ENCODE measurements at regions of chr4 and their contacts with region 1.

Region 1: DNA sequence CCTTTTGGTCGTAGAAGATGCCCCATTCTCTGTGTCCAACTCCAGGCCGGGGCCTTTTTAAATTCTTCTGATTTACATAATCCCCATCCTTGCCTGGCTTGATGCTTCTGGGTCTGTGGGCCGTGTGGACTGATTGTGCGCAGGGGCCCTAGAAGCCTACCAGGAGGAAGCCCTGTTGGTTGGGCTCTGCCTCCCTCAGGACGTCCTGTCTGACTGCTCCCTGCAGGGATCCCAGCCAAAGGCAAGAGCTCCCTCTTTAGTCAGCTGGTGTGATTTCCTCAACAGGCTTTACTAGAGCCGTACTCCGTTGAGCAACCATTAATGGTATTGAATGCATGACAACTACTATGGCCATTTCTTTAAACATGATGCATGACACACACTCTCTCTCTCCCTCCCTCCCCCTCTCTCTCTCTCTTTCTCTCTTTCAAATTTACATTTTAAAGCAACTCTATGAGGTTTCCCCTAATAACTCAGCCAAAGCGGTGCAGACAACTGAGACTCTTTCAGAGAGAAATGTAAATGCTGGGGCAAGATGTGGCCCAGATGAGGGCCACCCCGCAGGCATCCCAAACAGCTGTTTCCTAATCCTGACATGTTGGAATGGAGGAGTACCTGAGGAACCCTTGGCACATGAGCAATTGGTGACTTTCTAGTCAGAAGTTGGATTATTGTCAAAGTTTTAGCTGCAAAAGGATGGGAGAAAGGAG is 117.3 kb downstream of the DRD5 start:
- DNase-seq: peak; percentile 76
- ATAC-seq: peak; percentile 98
- H3K4me3 Mint-ChIP-seq: no peak overlapping the region
- H3K27ac Mint-ChIP-seq: no peak overlapping the region
- H3K4me1 Mint-ChIP-seq: peaks cover 12% of the 10 kb centered on the region
- H3K27me3 Mint-ChIP-seq: no peaks in the 10 kb centered on the region
- CTCF ChIP-seq: no peak

Region 2: GRCh38 chr4:9762823-9763475 is 135.8 kb before region 1 on chr4:
- CTCF ChIA-PET with region 1: interaction called, 39 read pairs
- POLR2A ChIA-PET with region 1: no interaction called
- DNase-seq: peak; percentile 58
- ATAC-seq: no peak; the same call in 1 of the 2 replicates
- H3K4me3 Mint-ChIP-seq: no peak overlapping the region
- H3K27ac Mint-ChIP-seq: no peak overlapping the region
- H3K4me1 Mint-ChIP-seq: peaks cover 2% of the 10 kb centered on the region
- H3K27me3 Mint-ChIP-seq: peaks cover 3% of the 10 kb centered on the region; the same call in 1 of the 2 replicates
- CTCF ChIP-seq: peak; percentile 44; the same call in 1 of the 2 replicates

Region 3: GRCh38 chr4:9913846-9914245 is 15.1 kb after region 1 on chr4:
- CTCF ChIA-PET with region 1: interaction called, 28 read pairs
- POLR2A ChIA-PET with region 1: no interaction called
- DNase-seq: no peak
- ATAC-seq: peak; percentile 34
- H3K4me3 Mint-ChIP-seq: no peak overlapping the region
- H3K27ac Mint-ChIP-seq: no peak overlapping the region
- H3K4me1 Mint-ChIP-seq: no peaks in the 10 kb centered on the region; the same call in 1 of the 2 replicates
- H3K27me3 Mint-ChIP-seq: peaks cover 3% of the 10 kb centered on the region; the same call in 1 of the 2 replicates
- CTCF ChIP-seq: no peak

Region 4: DNA sequence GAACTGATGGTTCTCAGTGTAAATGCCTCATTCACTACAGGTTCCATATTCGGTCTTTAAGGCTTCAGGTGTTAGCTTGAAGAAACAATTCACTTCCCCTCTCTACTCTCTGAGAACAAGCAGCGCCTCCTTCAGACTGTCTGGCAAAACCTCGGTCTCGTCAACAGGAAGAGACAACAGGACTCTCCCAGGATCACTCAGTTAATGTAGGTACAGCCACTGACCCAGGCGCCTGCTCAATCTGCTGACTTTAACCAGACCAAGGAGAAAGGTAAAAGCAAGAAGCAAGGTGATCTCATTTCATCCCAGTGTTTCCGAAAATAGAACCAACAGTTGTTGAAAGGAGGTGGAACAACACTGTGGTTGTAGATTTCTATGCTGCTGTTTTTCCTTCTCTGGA is 20.3 kb after region 1 on chr4:
- CTCF ChIA-PET with region 1: interaction called, 28 read pairs
- POLR2A ChIA-PET with region 1: no interaction called
- DNase-seq: peak; percentile 41
- ATAC-seq: peak; percentile 90
- H3K4me3 Mint-ChIP-seq: no peak overlapping the region
- H3K27ac Mint-ChIP-seq: no peak overlapping the region
- H3K4me1 Mint-ChIP-seq: peaks cover 20% of the 10 kb centered on the region
- H3K27me3 Mint-ChIP-seq: no peaks in the 10 kb centered on the region
- CTCF ChIP-seq: no peak

Measured in WTC11 (cell line).